AG04449 (cell line): ENCODE measurements at regions of chr14 and their contacts with region 1.

Region 1: GRCh38 chr14:100417466-100417865 is 94.3 kb downstream of the SLC25A47 start:
- DNase-seq: peak; percentile 77
- H3K4me3 ChIP-seq: no peak overlapping the region
- CTCF ChIP-seq: peak; percentile 94

Region 2: GRCh38 chr14:100406505-100407131 is 10.8 kb before region 1 on chr14:
- CTCF ChIA-PET with region 1: interaction called, 10 read pairs
- POLR2A ChIA-PET with region 1: interaction called, 4 read pairs
- DNase-seq: no peak
- H3K4me3 ChIP-seq: no peak overlapping the region
- CTCF ChIP-seq: no peak

Region 3: DNA sequence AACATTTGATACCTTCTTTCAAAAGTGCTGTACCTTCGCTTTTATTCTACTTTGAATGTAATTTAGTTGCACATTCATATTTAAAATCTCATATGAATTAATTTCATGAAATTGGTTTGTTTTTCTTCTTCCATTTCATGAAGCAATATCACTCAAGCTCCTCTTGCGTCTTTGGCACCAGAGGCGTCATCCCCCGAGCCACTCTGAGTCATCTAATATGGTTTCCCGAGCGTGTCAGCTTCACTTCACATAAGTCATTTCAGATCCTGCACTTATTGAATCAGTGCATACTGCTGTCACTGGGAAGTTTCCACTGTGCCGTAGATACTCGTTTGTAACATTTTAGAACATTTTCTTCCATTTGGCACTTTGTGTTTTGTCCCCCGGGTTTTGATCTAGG is 11.3 kb after region 1 on chr14:
- CTCF ChIA-PET with region 1: interaction called, 39 read pairs
- POLR2A ChIA-PET with region 1: no interaction called
- DNase-seq: peak; percentile 46
- H3K4me3 ChIP-seq: no peak overlapping the region
- CTCF ChIP-seq: no peak

Region 4: GRCh38 chr14:100440187-100440631 is 22.7 kb after region 1 on chr14:
- CTCF ChIA-PET with region 1: interaction called, 20 read pairs
- POLR2A ChIA-PET with region 1: interaction called, 5 read pairs
- DNase-seq: no peak
- H3K4me3 ChIP-seq: no peak overlapping the region
- CTCF ChIP-seq: peak; percentile 73

Region 5: GRCh38 chr14:100645192-100645990 is 227.9 kb after region 1 on chr14:
- CTCF ChIA-PET with region 1: interaction called, 145 read pairs
- POLR2A ChIA-PET with region 1: no interaction called
- DNase-seq: no peak
- H3K4me3 ChIP-seq: no peak overlapping the region
- CTCF ChIP-seq: peak; percentile 87

Region 6: GRCh38 chr14:100654814-100655740 is 237.6 kb after region 1 on chr14:
- CTCF ChIA-PET with region 1: interaction called, 75 read pairs
- POLR2A ChIA-PET with region 1: no interaction called
- DNase-seq: no peak
- H3K4me3 ChIP-seq: no peak overlapping the region
- CTCF ChIP-seq: peak; percentile 73

Region 7: DNA sequence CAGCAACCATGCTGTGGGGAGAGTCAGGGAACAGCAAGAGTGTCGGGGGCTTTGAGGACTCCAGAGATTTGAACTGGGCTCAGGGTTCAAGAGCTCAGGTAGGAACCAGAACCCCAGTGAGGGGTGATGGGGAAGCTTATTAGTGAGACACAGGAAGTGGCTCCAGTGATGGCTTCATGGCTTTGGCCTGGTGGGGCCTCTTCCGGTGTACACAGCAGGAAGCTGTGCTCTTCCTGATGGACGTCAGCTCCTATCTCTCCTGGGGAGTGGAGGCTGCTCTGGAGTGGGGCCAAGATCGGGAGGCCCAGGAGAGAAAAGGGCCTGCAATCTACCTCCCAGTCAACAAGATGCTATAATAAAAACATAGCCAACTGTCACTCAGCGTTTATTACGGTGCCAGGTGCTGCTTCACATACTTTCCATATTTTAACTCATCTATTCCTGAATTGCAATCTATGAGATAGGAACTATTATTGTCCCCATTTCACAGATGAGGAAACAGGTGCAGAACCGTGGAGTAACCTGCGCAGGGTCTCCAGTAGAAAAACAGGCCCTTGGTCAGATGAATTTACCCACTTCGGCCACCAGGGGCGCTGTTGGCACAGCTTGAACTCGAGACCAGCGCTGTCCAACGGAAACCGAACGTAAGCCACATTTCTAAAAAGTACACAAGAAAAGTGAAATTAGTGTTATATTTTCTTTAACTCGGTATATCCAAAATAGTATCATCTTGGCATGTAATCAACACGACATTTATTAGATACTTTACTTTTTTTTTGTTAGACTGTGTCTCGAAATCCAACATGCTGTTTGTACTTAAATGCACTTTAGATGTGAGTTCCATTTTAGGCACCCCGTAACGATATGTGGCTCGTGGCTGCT is 245.7 kb after region 1 on chr14:
- CTCF ChIA-PET with region 1: interaction called, 17 read pairs
- POLR2A ChIA-PET with region 1: interaction called, 3 read pairs
- DNase-seq: no peak
- H3K4me3 ChIP-seq: no peak overlapping the region
- CTCF ChIP-seq: peak; percentile 84